Right ventricle myocardium inferior (tissue), 1 donor: ENCODE measurements at regions of chr4 and their contacts with region 1.

Region 1: GRCh38 chr4:24912252-24913118 is at the start of gene CCDC149:
- DNase-seq: peak; percentile 87
- ATAC-seq: peak; percentile 87
- total RNA-seq, gene CCDC149: 11.4 TPM

Region 2: DNA sequence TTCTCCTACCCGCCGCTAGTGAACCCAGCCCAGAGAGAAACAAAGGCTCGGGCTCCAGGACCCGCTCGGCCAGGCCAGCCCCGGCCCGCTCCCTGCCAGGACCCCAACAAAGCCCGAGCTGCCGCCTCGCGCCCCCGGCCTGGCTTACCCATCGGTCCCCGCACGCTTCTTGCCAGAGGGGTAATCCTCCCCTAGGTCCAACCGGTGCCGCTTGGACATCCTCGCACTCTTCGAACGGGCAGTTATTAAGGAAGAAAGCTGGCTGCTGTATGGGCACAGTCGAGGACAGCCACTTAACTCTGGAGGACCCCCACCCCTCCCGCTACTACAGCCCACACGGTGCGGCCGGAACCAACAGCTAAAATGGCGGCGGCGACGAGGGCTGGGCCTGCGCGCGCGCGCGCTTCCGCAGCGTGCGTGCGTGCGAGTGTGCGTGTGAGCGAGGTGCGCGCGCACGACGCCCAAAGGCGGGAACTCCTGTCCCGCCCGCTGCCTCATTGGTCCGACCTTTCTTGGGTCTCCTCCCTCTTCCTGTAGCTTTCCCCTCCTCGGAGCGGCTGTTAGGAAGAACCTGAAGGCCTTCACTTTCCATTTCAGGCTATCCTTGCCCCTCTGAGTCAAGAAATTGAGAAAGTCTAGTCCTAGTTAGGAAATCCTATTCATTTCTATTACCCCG is 328.2 kb before region 1 on chr4 and contains the start of gene DHX15:
- intact Hi-C with region 1: loop called (anchors 5 kb)
- DNase-seq: peak; percentile 99
- ATAC-seq: peak; percentile 98
- total RNA-seq, gene DHX15: 53.9 TPM

Region 3: GRCh38 chr4:24794916-24795665 is 117.4 kb before region 1 on chr4 and contains the start of gene SOD3:
- intact Hi-C with region 1: loop called (anchors 10 kb)
- DNase-seq: peak; percentile 87
- ATAC-seq: peak; percentile 97
- total RNA-seq, gene SOD3: 63.4 TPM

Region 4: DNA sequence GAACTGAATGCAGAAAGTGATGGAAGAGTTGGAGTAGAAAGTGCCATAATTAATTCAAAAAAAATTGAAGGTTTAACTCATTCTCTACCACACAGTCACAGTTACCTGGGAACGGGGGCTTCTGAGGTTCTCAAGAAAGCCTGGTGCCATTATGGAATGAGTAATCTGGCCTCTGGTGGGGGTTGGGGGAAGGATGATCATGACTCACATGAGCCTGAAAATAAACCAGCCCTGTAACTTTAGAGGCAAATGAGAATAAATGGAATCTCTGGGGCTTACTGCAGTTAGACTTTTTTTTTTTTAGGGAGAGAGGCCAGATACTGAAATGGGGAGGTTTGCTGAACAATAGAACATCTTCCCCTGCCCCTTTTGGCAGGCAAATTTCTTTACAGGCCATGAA is 61.8 kb before region 1 on chr4:
- intact Hi-C with region 1: no loop called
- DNase-seq: no peak
- ATAC-seq: no peak

Region 5: GRCh38 chr4:24980064-24980690 is 67.7 kb after region 1 on chr4:
- intact Hi-C with region 1: loop called (anchors 5 kb)
- DNase-seq: no peak
- ATAC-seq: peak; percentile 49